ENCODE measurements at regions of chr2 and their contacts with region 1.

Region 1: DNA sequence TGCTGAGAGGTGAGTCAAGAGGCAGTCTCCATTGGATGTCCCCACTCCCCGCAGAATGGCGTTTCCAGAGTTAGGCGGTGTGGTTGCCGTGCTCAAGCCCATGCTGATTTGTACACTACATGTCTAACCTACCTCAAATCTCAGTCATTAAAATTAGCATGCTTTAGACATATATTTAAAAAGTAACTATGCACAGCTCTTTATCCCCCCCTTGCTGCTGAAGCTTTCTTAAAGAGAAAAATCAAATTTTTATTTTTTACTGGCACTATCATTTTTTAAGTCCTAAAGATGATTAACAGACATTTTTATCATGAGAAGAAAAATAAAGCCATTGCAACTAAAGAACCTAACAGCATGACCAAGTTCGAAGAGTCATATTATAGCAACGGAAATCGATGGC is 42.9 kb downstream of the BOLA3 start:
- DNase-seq: no peak
- H3K4me3 ChIP-seq: no peak overlapping the region
- H3K27ac ChIP-seq: no peak overlapping the region
- H3K4me1 ChIP-seq: no peaks in the 10 kb centered on the region
- H3K27me3 ChIP-seq: no peaks in the 10 kb centered on the region
- CTCF ChIP-seq: peak in 1 of 3 experiments; percentile 6
- POLR2A ChIP-seq: no peak

Region 2: DNA sequence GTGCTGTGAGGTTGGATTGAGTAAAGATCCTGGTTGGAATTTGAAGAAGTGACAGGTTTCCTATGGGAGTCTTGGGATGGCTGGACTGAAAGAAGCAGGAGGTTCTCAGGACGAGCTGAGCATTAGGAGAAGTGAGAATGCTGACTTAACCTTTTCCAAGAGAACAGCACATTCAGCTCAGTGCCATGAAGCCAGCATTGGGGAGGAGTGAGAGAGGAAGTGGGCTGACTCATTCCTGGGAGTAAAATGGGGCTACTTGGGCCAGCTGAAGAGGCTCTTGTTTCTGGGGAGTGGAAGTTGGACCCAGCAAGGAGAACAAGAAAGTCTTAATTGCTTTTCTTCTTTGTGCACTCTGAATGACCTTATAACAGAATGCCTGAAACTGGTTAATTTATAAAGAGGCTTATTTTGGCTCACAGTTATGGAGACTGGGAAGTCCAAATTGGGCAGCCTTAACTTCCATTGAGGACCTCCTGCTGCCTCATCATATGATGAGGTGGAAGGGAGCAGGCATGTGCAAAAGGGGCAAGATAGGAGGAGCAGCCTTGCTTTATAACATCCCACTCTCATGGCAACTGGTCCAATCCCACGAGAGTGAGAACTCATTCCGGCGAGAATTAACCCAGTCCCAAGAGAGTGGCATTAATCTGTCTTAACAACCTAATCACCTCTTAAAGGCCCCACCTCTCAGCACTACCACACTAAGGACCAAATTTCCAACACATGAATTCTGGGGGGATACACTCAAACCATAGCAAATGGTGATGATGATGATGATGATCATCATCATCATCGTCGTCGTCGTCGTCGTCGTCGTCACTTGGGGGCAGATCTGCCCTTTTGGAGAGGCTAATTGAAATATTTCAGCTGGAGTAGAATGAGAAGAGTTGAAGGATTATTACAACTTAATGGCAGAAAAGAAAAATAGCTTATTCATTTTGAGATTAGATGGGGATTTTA is 152.1 kb before region 1 on chr2:
- intact Hi-C with region 1: no loop called
- DNase-seq: peak; percentile 22
- H3K4me3 ChIP-seq: no peak overlapping the region
- H3K27ac ChIP-seq: no peak overlapping the region
- H3K4me1 ChIP-seq: no peaks in the 10 kb centered on the region
- H3K27me3 ChIP-seq: no peaks in the 10 kb centered on the region
- CTCF ChIP-seq: no peak
- POLR2A ChIP-seq: no peak

Region 3: GRCh38 chr2:73963385-73964120 is 141.3 kb before region 1 on chr2:
- intact Hi-C with region 1: loop called (anchors 10 kb)
- DNase-seq: peak; percentile 22
- H3K4me3 ChIP-seq: no peak overlapping the region
- H3K27ac ChIP-seq: no peak overlapping the region
- H3K4me1 ChIP-seq: no peaks in the 10 kb centered on the region
- H3K27me3 ChIP-seq: no peaks in the 10 kb centered on the region
- CTCF ChIP-seq: no peak
- POLR2A ChIP-seq: no peak

Region 4: GRCh38 chr2:74789271-74789670 is 684.4 kb after region 1 on chr2:
- intact Hi-C with region 1: no loop called
- DNase-seq: no peak
- H3K4me3 ChIP-seq: no peak overlapping the region
- H3K27ac ChIP-seq: no peak overlapping the region
- H3K4me1 ChIP-seq: no peaks in the 10 kb centered on the region
- H3K27me3 ChIP-seq: no peaks in the 10 kb centered on the region
- CTCF ChIP-seq: no peak
- POLR2A ChIP-seq: no peak